ENCODE measurements at regions of chr11 and their contacts with region 1.

Region 1: GRCh38 chr11:73335204-73335923 is 27.3 kb downstream of the ARHGEF17 start:
- DNase-seq: peak; percentile 59 to 82 (median 68)
- ATAC-seq: peak; percentile 92
- H3K4me3 ChIP-seq: no peak overlapping the region
- H3K4me3 Mint-ChIP-seq: no peak overlapping the region
- H3K27ac ChIP-seq: no peak overlapping the region
- H3K27ac Mint-ChIP-seq: no peak overlapping the region
- H3K4me1 ChIP-seq: no peaks in the 10 kb centered on the region
- H3K4me1 Mint-ChIP-seq: peaks cover 0 to 6% (median 0%) of the 10 kb centered on the region in 7 donors
- H3K27me3 ChIP-seq: no peaks in the 10 kb centered on the region
- H3K27me3 Mint-ChIP-seq: peaks cover 0 to 11% (median 0%) of the 10 kb centered on the region in 5 donors

Region 2: DNA sequence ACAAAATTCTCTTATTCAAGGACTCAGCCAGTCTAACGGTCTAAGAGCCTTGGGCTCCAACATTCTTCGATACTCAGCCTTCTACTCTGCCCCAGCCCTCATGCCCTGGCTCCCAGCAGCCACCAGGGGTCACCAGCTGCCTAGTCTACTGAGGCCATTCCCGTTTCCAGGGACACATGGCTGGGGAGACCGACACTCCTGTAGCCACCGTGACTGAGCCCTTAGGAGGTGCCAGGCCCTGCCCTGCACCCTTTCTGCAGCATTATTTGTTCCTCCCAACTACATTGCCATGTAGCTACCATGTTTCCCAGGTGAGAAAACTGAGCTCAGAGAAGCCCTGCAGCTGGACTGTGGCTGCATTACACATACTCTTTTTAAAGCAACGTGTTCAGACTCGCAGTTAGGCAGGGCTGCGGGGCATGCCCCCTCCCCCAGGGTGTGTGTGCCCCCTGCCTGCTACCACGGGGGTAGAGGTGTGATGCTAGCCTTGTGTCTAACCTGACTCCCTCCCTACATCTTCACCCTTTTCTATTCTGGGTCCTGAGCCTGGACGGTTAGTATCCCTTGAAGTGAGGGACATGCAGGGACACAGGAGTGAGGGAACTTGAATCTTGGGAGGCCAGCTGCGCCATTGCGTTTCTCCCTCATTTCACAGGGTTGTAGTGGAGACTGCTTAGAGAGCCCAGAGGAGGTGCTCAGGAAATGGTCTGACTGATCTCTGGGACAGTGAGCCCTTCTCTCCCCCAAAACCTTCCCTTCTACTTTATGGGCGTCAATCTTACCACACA is 503.7 kb before region 1 on chr11:
- CTCF ChIA-PET with region 1: no interaction called
- POLR2A ChIA-PET with region 1: no interaction called
- intact Hi-C with region 1: loop called in 1 of 2 experiments (anchors 1 kb)
- DNase-seq: peak in 7 of 9 donors; percentile 31 to 57 (median 45)
- ATAC-seq: peak; percentile 79
- H3K4me3 ChIP-seq: no peak overlapping the region
- H3K4me3 Mint-ChIP-seq: no peak overlapping the region
- H3K27ac ChIP-seq: peak overlapping the region; percentile 22
- H3K27ac Mint-ChIP-seq: peak overlapping the region in 8 of 9 donors; percentile 52 to 86 (median 80)
- H3K4me1 ChIP-seq: peaks cover 0 to 4% of the 10 kb centered on the region in 2 donors
- H3K4me1 Mint-ChIP-seq: peaks cover 5 to 37% (median 13%) of the 10 kb centered on the region in 7 donors
- H3K27me3 ChIP-seq: no peaks in the 10 kb centered on the region
- H3K27me3 Mint-ChIP-seq: no peaks in the 10 kb centered on the region

Region 3: GRCh38 chr11:73295231-73295995 is 40.0 kb before region 1 on chr11:
- CTCF ChIA-PET with region 1: interaction called, 8 read pairs
- POLR2A ChIA-PET with region 1: interaction called, 3 read pairs
- intact Hi-C with region 1: loop called (anchors 1 kb)
- DNase-seq: peak; percentile 35 to 79 (median 65)
- ATAC-seq: peak; percentile 92
- H3K4me3 ChIP-seq: no peak overlapping the region
- H3K4me3 Mint-ChIP-seq: no peak overlapping the region
- H3K27ac ChIP-seq: no peak overlapping the region
- H3K27ac Mint-ChIP-seq: no peak overlapping the region
- H3K4me1 ChIP-seq: no peaks in the 10 kb centered on the region
- H3K4me1 Mint-ChIP-seq: peaks cover 0 to 4% (median 0%) of the 10 kb centered on the region in 7 donors
- H3K27me3 ChIP-seq: no peaks in the 10 kb centered on the region
- H3K27me3 Mint-ChIP-seq: peaks cover 9 to 17% (median 10%) of the 10 kb centered on the region in 5 donors

Region 4: GRCh38 chr11:73307323-73308002 is 27.9 kb before region 1 on chr11:
- CTCF ChIA-PET with region 1: interaction called, 28 read pairs
- POLR2A ChIA-PET with region 1: no interaction called
- intact Hi-C with region 1: loop called (anchors 1 kb)
- DNase-seq: peak; percentile 75 to 90 (median 86)
- ATAC-seq: peak; percentile 83
- H3K4me3 ChIP-seq: peak overlapping the region; percentile 63
- H3K4me3 Mint-ChIP-seq: peak overlapping the region; percentile 83 to 95 (median 91)
- H3K27ac ChIP-seq: no peak overlapping the region
- H3K27ac Mint-ChIP-seq: peak overlapping the region in 5 of 9 donors; percentile 9 to 68 (median 31)
- H3K4me1 ChIP-seq: peaks cover 4 to 5% of the 10 kb centered on the region in 2 donors
- H3K4me1 Mint-ChIP-seq: peaks cover 8 to 13% (median 11%) of the 10 kb centered on the region in 7 donors
- H3K27me3 ChIP-seq: peaks cover 0 to 4% of the 10 kb centered on the region in 2 donors
- H3K27me3 Mint-ChIP-seq: peaks cover 14 to 55% (median 21%) of the 10 kb centered on the region in 5 donors

Region 5: DNA sequence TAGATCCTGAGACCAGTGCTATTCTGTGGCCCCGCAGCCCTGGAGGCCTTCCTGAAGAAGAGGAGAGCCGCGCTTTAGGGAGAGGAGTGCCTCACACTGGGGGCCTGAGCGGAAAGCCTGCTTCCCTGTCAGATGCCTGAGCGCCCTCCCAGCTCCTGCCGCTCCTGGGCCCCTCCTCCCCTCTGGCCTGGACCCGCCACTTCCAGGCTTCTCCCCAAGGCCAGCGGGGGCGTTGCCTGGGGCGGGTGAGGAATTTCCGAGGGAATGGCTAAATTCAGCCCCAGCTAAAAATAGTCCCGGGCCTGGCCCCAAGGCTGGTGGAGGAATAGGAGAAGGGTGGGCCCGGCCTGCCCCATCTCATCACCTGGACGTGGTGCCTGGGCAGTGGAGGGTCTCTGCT is 11.9 kb before region 1 on chr11:
- CTCF ChIA-PET with region 1: interaction called, 12 read pairs
- POLR2A ChIA-PET with region 1: no interaction called
- intact Hi-C with region 1: no loop called
- DNase-seq: no peak
- ATAC-seq: no peak
- H3K4me3 ChIP-seq: no peak overlapping the region
- H3K4me3 Mint-ChIP-seq: no peak overlapping the region
- H3K27ac ChIP-seq: no peak overlapping the region
- H3K27ac Mint-ChIP-seq: no peak overlapping the region
- H3K4me1 ChIP-seq: no peaks in the 10 kb centered on the region
- H3K4me1 Mint-ChIP-seq: peaks cover 0 to 11% (median 8%) of the 10 kb centered on the region in 7 donors
- H3K27me3 ChIP-seq: no peaks in the 10 kb centered on the region
- H3K27me3 Mint-ChIP-seq: no peaks in the 10 kb centered on the region

Measured in naive thymus-derived CD4-positive, alpha-beta T cell (primary cell).